Activated CD4-positive, alpha-beta memory T cell treated with anti-CD3 and anti-CD28 coated beads, Interleukin-2, amount 10 ng/mL, durations not matched to agents 7 days and 5 days (primary cell): ENCODE measurements at regions of chr22 and their contacts with region 1.

Region 1: DNA sequence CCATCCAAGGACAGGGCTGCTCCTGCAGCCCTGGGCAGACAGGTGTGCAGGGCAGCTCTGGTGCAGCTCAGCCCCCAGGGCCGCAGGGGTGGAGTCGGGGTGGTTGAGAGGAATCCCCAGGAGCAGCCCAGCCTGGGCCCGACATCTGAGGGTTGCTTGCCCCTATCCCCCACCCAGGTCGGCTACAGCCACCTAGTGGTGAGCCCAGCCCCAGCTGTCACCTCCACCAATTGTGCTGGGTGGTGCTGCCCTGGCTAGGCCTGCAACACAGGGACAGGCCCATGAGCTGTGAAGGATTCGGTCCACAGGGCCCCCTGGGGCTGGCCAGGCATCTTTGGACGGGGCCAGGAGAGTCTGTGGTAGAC is 29.6 kb downstream of the RTN4R start:
- DNase-seq: peak; percentile 70
- H3K4me3 Mint-ChIP-seq: no peak overlapping the region
- H3K27ac Mint-ChIP-seq: peak overlapping the region; percentile 86
- H3K4me1 Mint-ChIP-seq: peaks cover 27% of the 10 kb centered on the region
- H3K27me3 Mint-ChIP-seq: no peaks in the 10 kb centered on the region

Region 2: GRCh38 chr22:20156611-20157429 is 81.7 kb before region 1 on chr22:
- CTCF ChIA-PET with region 1: interaction called, 18 read pairs
- POLR2A ChIA-PET with region 1: interaction called, 3 read pairs
- DNase-seq: peak; percentile 86
- H3K4me3 Mint-ChIP-seq: no peak overlapping the region
- H3K27ac Mint-ChIP-seq: no peak overlapping the region
- H3K4me1 Mint-ChIP-seq: no peaks in the 10 kb centered on the region
- H3K27me3 Mint-ChIP-seq: no peaks in the 10 kb centered on the region

Region 3: GRCh38 chr22:20531315-20532201 is 293.0 kb after region 1 on chr22:
- CTCF ChIA-PET with region 1: no interaction called
- POLR2A ChIA-PET with region 1: no interaction called
- DNase-seq: no peak
- H3K4me3 Mint-ChIP-seq: no peak overlapping the region
- H3K27ac Mint-ChIP-seq: peak overlapping the region; percentile 19
- H3K4me1 Mint-ChIP-seq: peaks cover 38% of the 10 kb centered on the region
- H3K27me3 Mint-ChIP-seq: no peaks in the 10 kb centered on the region